ENCODE measurements at regions of chr1 and their contacts with region 1.

Region 1: DNA sequence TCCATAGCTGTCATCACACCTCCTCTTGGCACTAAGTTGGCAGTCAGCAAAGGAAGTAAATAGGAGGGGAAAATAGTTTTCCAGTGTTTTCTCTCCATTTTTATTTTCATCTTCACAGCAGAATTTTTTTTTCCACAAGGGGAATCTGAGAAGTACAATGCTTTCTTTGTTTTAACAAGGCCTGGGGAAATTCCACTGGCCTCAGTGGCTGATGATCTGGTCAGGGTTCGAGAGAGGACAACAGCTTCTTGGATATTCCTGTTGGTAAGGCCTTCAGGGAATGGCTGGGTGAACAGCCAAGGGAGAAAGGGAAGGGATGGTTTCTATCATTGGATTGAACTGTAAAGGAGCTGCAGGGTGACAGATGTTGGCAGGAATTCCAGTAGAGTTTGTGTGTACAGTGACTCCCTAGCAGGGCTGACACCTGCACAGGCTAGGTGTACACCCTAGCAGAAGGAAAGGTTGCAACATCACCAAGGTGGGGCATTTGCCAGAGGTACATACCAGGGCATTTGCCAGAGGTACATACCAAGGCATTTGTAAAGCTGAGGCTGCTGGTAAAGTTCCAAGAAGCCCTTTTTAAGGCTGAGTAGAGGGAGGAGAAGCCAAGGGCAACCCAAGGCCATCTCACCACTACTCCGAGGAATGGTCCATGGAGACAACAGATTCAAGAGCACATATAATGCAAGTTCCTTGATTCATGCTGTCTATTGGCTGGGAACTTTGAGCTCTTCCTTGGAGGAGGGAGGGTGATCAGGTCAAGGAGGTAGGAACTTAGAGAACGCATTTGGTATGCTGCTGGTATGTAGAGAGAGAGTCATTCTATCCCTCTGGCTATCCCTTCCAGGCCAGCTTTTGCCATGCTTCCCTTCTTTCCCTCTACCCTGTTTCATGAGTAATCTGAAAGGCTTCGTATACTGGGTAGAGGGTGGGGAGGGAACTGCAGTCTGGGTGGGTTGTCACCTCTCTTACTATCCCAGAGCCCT is 3.1 kb downstream of the GJA5 start:
- DNase-seq: peak; percentile 100
- ATAC-seq: peak; percentile 85
- H3K4me3 ChIP-seq: peak overlapping the region; percentile 9; the same call in 1 of the 2 replicates
- H3K27ac ChIP-seq: peak overlapping the region; percentile 74
- H3K4me1 ChIP-seq: peaks cover 47% of the 10 kb centered on the region
- H3K27me3 ChIP-seq: no peaks in the 10 kb centered on the region
- CTCF ChIP-seq: no peak

Region 2: GRCh38 chr1:147723691-147724323 is 33.5 kb before region 1 on chr1:
- CTCF ChIA-PET with region 1: no interaction called
- POLR2A ChIA-PET with region 1: no interaction called
- intact Hi-C with region 1: loop called (anchors 2 kb)
- DNase-seq: peak; percentile 85
- ATAC-seq: peak; percentile 98
- H3K4me3 ChIP-seq: no peak overlapping the region
- H3K27ac ChIP-seq: no peak overlapping the region
- H3K4me1 ChIP-seq: peaks cover 19% of the 10 kb centered on the region
- H3K27me3 ChIP-seq: no peaks in the 10 kb centered on the region
- CTCF ChIP-seq: peak; percentile 95

Measured in PC-3 (cell line).